ENCODE measurements at regions of chr10 and their contacts with region 1.

Region 1: GRCh38 chr10:132637477-132638129 is 100.0 kb downstream of the INPP5A start:
- DNase-seq: peak in 27 of 42 donors; percentile 8 to 83 (median 34)

Region 2: DNA sequence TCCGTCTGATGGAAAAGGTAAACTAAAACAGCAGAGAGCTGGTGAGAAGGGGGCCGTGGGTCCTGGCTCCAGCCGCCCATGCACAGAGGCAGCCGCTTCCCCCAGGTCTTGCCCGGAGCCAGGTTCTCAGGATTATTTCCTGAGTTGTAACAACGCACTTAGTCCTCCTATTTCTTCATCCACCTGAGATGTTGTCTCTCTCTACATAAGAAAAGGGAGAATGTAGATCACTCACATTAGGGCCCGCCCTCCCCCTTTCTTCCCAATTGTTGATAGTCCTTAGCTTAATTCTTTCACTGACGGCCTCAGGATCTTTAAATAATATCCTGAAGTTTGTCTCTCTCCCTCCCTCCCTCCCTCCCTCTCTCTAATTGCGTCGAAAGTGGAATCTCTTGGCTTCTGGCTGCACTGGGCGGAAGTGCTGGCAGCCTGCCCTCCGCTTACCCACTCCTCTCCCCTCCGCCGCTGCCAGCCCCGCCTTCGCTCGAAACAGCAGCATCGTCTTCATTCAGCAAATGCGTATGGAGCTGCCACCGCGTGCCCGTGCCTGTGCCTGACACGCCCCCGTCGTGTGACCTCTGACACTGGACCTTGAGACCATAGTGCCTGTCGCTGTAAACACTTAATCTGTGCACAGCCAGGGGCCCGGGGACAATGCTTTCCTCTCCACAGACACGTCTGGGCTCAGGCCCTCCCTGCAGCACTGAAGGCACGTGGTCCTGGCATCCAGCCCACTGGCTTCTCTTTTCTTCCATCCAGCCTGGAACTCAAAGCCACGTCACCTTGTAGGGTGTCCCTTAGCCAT is 911.3 kb before region 1 on chr10:
- intact Hi-C with region 1: no loop called
- DNase-seq: peak in 34 of 42 donors; percentile 14 to 80 (median 40)

Region 3: DNA sequence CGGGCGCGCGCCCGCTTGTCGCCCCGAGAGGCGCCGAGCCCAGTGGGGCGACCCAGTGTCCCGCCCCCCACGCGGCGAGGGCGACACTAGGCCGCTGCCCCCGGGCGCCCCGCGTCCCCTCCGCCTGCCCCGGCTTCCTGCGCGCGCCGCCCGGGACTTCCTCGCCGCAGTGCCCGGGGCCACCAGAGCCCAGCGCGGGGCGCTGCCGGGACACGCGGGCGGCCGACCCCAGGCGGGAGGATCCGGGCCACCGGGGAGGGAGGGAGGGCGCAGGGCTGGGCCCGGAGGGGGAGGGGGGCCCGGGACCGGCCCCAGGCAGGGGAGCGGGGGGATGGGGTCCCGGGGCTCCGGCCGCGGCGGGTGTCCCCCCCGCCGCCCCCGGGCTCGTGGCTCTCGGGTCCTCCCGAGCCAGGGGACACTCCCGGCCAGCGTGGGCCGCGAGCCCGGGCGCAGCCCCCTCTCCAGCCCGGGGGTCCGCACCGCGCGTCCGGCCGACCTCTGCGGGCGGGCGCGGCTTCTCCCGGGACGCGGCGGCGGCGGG is 241.0 kb before region 1 on chr10:
- intact Hi-C with region 1: loop called (anchors 10 kb)
- DNase-seq: peak in 9 of 42 donors; percentile 39 to 73 (median 59)

Region 4: DNA sequence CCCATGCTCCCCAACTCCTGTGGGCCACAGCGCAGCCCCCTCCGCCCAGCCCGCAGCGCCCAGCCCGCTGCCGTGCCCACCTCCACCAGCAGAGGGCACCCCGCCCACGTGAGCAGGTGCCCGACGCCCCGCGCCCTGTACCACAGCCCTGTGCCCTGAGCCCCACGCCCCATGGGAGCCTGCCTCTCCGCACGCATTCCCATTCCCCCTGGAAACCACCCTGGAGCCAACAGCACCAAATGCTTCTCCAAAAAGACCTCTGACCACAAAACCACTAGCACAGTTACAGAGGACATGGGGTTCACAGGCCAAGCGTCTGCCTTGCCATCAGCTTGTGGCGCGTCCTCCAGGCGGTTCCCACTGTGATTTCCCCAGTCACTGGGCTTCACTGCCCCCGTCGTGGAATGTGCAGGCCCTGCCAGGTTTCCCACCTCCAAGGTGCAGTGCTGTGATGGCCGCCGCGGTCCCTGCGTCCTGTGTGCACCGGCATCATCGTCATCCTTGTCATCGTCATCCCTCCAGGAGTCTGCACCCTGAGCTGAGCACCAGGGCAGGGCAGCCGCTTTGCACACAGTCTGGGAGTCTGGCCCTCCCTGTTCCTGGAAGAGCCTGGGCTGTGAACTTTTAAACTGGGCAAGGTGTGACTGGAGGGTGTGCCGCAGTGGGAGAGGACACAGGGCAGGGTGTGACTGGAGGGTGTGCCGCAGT is 178.9 kb before region 1 on chr10:
- intact Hi-C with region 1: loop called (anchors 2 kb)
- DNase-seq: peak in 41 of 42 donors; percentile 38 to 88 (median 71)

Region 5: GRCh38 chr10:132571650-132572535 is 65.7 kb before region 1 on chr10:
- intact Hi-C with region 1: no loop called
- DNase-seq: peak in 2 of 42 donors; percentile 30 to 48

Region 6: DNA sequence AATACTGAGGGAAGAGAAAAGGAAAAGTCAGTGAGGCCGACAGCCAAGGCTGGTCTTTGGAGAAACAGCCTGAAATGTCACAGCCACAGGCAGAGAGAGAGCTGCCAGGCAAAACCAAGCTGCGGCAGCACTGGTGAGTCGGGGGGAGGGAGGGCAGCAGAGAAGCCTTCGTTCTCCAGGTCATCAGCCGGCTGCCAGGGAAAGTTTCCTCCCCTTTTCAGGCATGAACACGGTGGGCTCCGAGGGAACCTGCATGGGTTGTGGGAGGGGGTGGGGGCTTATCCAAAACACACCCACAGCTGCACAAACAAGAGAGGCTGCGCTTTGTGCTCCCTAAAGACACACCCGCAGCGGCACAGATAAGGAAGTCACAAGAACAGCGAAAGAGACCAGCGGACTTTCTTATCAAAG is 210.7 kb after region 1 on chr10:
- intact Hi-C with region 1: no loop called
- DNase-seq: peak in 8 of 42 donors; percentile 7 to 42 (median 21)

Measured in head of caudate nucleus (tissue), 42 donors.